ENCODE measurements at regions of chr15 and their contacts with region 1.

Region 1: GRCh38 chr15:25797936-25798901 is 64.9 kb downstream of the ATP10A start:
- DNase-seq: no peak
- ATAC-seq: no peak
- H3K4me3 ChIP-seq: no peak overlapping the region
- H3K4me3 Mint-ChIP-seq: peak overlapping the region; percentile 23
- H3K27ac ChIP-seq: no peak overlapping the region
- H3K27ac Mint-ChIP-seq: peak overlapping the region; percentile 69
- H3K4me1 ChIP-seq: peaks cover 55% of the 10 kb centered on the region
- H3K4me1 Mint-ChIP-seq: peaks cover 63% of the 10 kb centered on the region
- H3K27me3 ChIP-seq: no peaks in the 10 kb centered on the region
- H3K27me3 Mint-ChIP-seq: no peaks in the 10 kb centered on the region
- CTCF ChIP-seq: no peak

Region 2: GRCh38 chr15:25582886-25583285 is 215.3 kb before region 1 on chr15:
- CTCF ChIA-PET with region 1: no interaction called
- POLR2A ChIA-PET with region 1: no interaction called
- intact Hi-C with region 1: no loop called
- DNase-seq: no peak
- ATAC-seq: no peak
- H3K4me3 ChIP-seq: no peak overlapping the region
- H3K4me3 Mint-ChIP-seq: no peak overlapping the region
- H3K27ac ChIP-seq: no peak overlapping the region
- H3K27ac Mint-ChIP-seq: no peak overlapping the region
- H3K4me1 ChIP-seq: no peaks in the 10 kb centered on the region
- H3K4me1 Mint-ChIP-seq: no peaks in the 10 kb centered on the region
- H3K27me3 ChIP-seq: no peaks in the 10 kb centered on the region
- H3K27me3 Mint-ChIP-seq: peaks cover 13% of the 10 kb centered on the region
- CTCF ChIP-seq: no peak

Region 3: DNA sequence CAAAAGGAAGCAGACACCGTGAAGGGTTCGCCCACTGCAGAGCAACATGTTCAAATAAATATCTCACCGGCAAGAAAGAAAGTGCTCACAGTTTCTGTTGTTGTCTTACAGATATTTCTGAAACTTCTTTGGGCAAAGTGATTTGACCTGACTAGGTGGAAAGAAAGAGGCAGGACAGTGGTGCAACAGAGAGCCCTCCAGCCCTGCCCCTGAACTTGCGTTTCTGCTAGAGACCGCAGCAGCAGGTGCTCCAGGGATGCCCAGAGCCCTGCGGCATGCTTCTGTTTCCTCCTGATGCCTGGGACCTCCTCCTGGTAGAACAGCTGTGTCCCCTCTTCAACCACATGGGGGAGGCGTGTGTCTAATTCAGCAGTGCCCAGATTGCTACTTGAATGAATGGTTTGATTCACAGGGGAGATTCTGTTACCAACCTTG is 58.5 kb before region 1 on chr15:
- CTCF ChIA-PET with region 1: no interaction called
- POLR2A ChIA-PET with region 1: no interaction called
- intact Hi-C with region 1: loop called in 1 of 2 experiments (anchors 5 kb)
- DNase-seq: peak in 13 of 14 experiments; percentile 13 to 67 (median 39)
- ATAC-seq: peak; percentile 88
- H3K4me3 ChIP-seq: no peak overlapping the region
- H3K4me3 Mint-ChIP-seq: no peak overlapping the region
- H3K27ac ChIP-seq: no peak overlapping the region
- H3K27ac Mint-ChIP-seq: no peak overlapping the region
- H3K4me1 ChIP-seq: peaks cover 16% of the 10 kb centered on the region
- H3K4me1 Mint-ChIP-seq: peaks cover 44% of the 10 kb centered on the region
- H3K27me3 ChIP-seq: no peaks in the 10 kb centered on the region
- H3K27me3 Mint-ChIP-seq: no peaks in the 10 kb centered on the region
- CTCF ChIP-seq: peak; percentile 51

Region 4: DNA sequence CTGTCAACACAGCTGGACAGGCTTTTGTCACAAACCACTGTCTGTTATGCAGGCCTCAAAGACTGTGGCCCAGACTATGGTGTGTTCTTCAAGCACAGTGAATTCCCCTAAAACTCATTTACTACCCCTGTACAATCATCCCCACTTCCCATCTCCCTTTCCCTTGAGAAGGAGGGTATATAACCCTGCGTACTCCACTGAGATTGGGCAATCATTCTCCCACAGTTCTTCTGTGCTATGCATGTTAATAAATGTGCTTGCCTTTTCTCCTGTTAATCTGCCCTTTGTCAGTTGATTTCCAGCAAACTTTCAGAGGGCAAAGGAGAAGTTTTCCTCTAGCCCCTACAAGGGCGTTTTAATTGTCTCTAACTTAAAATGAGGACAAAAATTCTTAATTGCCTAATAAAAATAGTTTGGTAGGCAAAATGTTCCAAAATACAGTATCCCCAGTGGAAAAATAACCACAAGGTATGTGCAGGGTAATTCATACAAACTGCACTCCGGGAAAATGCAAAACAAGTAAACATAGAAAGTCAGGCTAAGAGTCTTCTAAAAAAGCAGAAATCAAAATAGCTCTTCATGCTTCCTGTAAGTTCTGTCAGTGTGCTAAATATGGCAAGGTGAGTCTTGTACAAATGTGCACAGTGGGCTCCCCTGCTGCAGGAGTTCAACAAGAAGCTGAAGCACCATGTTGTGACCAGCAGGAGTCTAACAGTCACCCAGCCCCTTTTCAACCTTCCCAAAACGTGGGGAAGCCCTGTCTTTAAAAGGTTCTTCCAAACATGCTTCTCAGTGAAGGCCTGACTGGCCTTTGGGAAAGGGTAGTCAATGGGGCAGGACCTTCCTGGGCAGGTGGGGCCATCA is 54.7 kb after region 1 on chr15:
- CTCF ChIA-PET with region 1: no interaction called
- POLR2A ChIA-PET with region 1: no interaction called
- intact Hi-C with region 1: no loop called
- DNase-seq: peak in 2 of 14 experiments; percentile 29 to 39
- ATAC-seq: peak; percentile 17
- H3K4me3 ChIP-seq: no peak overlapping the region
- H3K4me3 Mint-ChIP-seq: peak overlapping the region; percentile 80
- H3K27ac ChIP-seq: peak overlapping the region in 1 of 2 donors; percentile 46
- H3K27ac Mint-ChIP-seq: peak overlapping the region; percentile 93
- H3K4me1 ChIP-seq: peaks cover 65% of the 10 kb centered on the region
- H3K4me1 Mint-ChIP-seq: peaks cover 96% of the 10 kb centered on the region
- H3K27me3 ChIP-seq: no peaks in the 10 kb centered on the region
- H3K27me3 Mint-ChIP-seq: no peaks in the 10 kb centered on the region
- CTCF ChIP-seq: no peak